HAP-1 (cell line): ENCODE measurements at regions of chr5 and their contacts with region 1.

Region 1: DNA sequence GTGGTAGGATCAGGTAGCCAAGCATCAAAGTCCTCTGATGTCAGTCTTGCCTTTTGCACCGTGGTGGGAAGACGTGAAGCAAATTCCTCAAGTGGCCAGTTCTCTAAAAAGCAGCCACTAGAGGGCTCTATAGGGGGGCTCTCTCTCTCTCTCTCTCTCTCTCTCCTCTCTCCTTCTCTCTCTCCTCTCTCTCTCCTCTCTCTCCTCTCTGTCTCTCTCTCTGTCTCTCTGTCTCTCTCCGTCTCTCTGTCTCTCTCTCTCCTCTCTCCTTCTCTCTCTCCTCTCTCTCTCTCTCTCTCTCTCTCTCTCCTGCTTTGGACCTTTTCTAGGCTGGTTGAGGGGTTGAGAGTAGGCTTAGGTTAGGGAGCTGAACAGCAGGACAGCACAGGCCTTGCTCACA is 13.9 kb upstream of the OSMR start:
- DNase-seq: peak; percentile 31 to 49
- H3K4me3 ChIP-seq: no peak overlapping the region
- H3K4me1 ChIP-seq: no peaks in the 10 kb centered on the region
- H3K27me3 ChIP-seq: no peaks in the 10 kb centered on the region

Region 2: GRCh38 chr5:38208782-38209378 is 623.0 kb before region 1 on chr5:
- in situ Hi-C with region 1: no loop called
- DNase-seq: peak; percentile 32 to 38
- H3K4me3 ChIP-seq: no peak overlapping the region
- H3K4me1 ChIP-seq: no peaks in the 10 kb centered on the region
- H3K27me3 ChIP-seq: no peaks in the 10 kb centered on the region

Region 3: DNA sequence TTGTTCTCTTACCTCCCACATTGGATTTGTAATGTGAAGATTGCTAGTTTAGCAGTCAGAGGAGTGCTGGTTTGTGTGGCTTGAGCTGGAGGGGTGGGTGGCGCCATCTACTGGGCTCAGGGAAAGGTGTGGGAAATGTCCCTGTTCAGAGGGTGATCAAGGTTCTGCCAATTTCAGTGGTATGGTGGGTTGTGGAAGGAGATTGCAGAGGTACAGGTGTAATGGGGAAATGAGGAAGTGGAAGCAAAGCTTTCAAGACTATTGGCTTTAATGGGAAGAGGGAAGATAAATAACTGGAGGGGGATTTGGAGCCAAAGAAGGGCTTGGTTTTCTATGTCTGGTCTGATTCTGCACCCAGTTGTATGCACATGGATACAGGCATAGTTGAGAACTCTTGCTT is 90.3 kb after region 1 on chr5:
- in situ Hi-C with region 1: loop called (anchors 10 kb)
- DNase-seq: peak; percentile 45 to 69
- H3K4me3 ChIP-seq: no peak overlapping the region
- H3K4me1 ChIP-seq: no peaks in the 10 kb centered on the region
- H3K27me3 ChIP-seq: no peaks in the 10 kb centered on the region